Activated CD4-positive, alpha-beta T cell treated with anti-CD3 and anti-CD28 coated beads, Interleukin-2, amount 10 ng/mL, durations not matched to agents 24 days and 14 days (primary cell): ENCODE measurements at regions of chr7 and their contacts with region 1.

Region 1: GRCh38 chr7:44999245-45000095 is 531 bp upstream of the CCM2 start:
- DNase-seq: peak; percentile 100
- H3K4me3 Mint-ChIP-seq: peak overlapping the region; percentile 87
- H3K27ac Mint-ChIP-seq: peak overlapping the region; percentile 97
- H3K4me1 Mint-ChIP-seq: peaks cover 53% of the 10 kb centered on the region
- H3K27me3 Mint-ChIP-seq: peaks cover 3% of the 10 kb centered on the region

Region 2: DNA sequence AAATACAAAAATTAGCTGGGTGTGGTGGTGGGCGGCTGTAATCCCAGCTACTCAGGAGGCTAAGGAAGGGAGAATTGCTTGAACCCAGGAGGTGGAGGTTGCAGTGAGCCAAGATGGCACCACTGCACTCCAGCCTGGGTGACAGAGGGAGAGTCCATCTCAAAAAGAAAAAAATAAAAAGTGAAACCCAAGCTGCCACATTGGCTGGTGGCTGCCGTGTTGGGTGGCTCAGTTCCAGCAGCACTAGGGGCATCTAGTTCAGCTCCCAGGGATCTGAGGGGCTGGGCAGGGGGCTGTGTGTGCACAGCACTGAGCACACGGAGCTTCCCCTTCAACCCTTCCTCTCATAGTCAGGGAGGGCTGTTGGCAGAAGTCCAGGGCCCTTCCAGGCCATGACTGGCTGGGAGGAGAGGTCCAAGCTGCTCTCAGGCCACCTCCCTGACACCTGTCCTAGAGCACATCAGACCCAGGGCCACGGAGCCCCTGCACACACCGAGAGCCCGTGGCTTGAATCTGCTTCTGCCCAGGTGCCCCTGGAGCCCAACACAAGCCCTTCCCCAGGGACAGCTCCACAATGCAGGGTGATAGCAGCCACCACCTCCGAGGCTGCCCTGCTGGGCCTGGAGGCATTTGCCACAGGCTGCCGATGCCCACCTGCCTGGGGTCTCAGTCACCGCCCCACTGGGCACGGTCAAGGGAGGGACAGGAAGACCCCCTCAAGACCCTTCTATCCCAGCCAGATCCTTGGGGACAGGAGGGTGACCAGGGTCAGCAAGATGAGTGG is 751.4 kb before region 1 on chr7:
- intact Hi-C with region 1: no loop called
- DNase-seq: no peak
- H3K4me3 Mint-ChIP-seq: no peak overlapping the region
- H3K27ac Mint-ChIP-seq: no peak overlapping the region
- H3K4me1 Mint-ChIP-seq: peaks cover 3% of the 10 kb centered on the region
- H3K27me3 Mint-ChIP-seq: no peaks in the 10 kb centered on the region

Region 3: GRCh38 chr7:44738051-44738723 is 261.3 kb before region 1 on chr7:
- intact Hi-C with region 1: no loop called
- DNase-seq: no peak
- H3K4me3 Mint-ChIP-seq: no peak overlapping the region
- H3K27ac Mint-ChIP-seq: peak overlapping the region; percentile 45
- H3K4me1 Mint-ChIP-seq: peaks cover 19% of the 10 kb centered on the region
- H3K27me3 Mint-ChIP-seq: no peaks in the 10 kb centered on the region

Region 4: GRCh38 chr7:44797329-44798251 is 201.9 kb before region 1 on chr7:
- intact Hi-C with region 1: loop called (anchors 2 kb)
- DNase-seq: peak; percentile 95
- H3K4me3 Mint-ChIP-seq: peak overlapping the region; percentile 98
- H3K27ac Mint-ChIP-seq: peak overlapping the region; percentile 97
- H3K4me1 Mint-ChIP-seq: peaks cover 31% of the 10 kb centered on the region
- H3K27me3 Mint-ChIP-seq: no peaks in the 10 kb centered on the region

Region 5: DNA sequence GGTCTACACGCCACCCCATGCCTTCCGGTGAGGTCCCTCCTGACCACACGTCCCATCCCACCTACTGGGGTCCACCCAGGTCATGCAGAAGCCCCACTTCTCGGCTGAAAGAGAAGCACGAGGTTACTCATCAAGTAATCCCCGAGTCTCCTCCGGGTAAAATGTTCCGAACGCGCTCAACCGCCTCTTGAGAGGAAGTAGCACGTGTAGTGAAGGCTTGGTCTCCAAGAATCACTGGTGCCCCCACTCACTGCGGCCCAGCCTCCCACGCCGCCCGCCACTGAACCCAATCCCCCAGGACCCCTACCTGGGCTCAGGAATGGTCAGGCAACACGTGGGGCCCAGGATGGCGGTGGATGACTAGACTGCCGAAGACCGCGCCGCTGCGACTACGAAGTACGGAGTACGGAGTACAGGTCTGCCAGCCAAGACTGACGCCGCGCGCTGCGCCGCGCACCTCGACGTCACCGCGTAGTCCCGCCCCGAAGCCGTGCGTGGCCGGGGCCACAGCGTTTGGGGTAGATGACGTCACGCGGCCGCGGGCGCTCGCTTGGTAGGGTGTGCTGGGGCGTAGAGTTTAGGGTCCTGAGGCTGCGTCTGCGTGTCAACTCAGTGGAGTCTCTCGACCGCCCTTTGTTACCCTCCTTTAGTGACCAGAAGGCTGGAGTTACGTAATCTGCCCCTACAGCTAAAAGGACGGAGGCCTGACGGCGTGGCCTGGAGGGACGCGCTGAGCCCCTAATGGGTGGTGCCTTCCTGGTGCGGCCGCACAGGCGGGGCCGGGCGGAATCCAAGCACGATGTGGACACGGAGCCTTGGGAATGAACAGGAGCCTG is 13.0 kb before region 1 on chr7:
- intact Hi-C with region 1: loop called (anchors 1 kb)
- DNase-seq: peak; percentile 99
- H3K4me3 Mint-ChIP-seq: peak overlapping the region; percentile 99
- H3K27ac Mint-ChIP-seq: peak overlapping the region; percentile 99
- H3K4me1 Mint-ChIP-seq: peaks cover 55% of the 10 kb centered on the region
- H3K27me3 Mint-ChIP-seq: no peaks in the 10 kb centered on the region

Region 6: GRCh38 chr7:45035893-45036292 is 36.4 kb after region 1 on chr7:
- intact Hi-C with region 1: loop called (anchors 2 kb)
- DNase-seq: peak; percentile 74
- H3K4me3 Mint-ChIP-seq: peak overlapping the region; percentile 69
- H3K27ac Mint-ChIP-seq: peak overlapping the region; percentile 90
- H3K4me1 Mint-ChIP-seq: peaks cover 56% of the 10 kb centered on the region
- H3K27me3 Mint-ChIP-seq: no peaks in the 10 kb centered on the region

Region 7: DNA sequence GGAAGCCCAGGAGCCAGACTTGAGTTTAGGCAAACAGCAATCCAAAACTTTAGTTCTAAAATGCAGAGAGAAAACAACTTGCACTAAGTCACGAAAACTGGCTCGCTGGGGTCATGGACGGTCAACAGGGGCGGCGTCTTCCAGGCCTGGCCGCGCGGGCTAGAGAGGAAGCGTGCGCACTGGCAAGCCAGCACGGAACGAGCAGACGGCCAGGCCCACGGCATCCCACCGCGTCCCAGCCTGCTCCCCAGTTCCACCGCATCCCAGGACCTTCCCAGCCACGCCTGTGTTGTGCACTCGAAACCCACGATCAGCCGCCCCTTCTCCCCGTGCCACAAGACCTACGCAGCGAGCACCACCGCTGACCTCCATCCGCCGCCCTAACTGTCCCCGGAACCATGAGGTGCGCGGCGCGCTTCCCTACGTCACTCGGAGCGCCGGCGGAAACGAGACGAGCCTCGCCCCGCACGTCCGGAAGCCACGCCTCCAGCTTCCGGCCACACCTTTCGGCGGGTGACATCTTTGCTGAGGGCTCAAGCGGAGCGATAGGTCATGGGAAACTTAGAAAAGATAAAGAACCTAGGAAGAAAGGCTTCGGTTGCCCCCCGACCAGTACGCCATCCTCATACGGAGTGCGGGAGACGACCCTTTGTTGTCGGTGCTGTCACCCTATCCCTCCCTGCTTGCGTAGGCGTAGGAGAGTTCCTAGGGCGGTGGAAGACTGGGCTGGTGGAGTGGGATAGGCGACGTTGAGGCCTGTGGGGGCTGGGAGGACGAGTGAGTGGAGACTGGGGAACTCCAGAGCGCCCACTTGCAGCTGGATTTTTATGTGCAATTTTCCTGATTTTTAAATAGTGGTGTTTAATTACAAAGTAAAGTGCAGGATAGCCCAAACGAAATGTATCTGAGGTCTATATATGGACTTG is 112.1 kb after region 1 on chr7 and contains the start of gene TBRG4:
- intact Hi-C with region 1: loop called (anchors 1 kb)
- DNase-seq: peak; percentile 99
- H3K4me3 Mint-ChIP-seq: peak within 1 kb of the TSS; percentile 98
- H3K27ac Mint-ChIP-seq: peak within 1 kb of the TSS; percentile 99
- H3K4me1 Mint-ChIP-seq: peaks cover 35% of the 10 kb centered on the region
- H3K27me3 Mint-ChIP-seq: peaks cover 21% of the 10 kb centered on the region
- total RNA-seq, gene TBRG4: 192 and 198 TPM in 2 replicates